Psoas muscle (tissue), 8 donors: ENCODE measurements at regions of chr6 and their contacts with region 1.

Region 1: DNA sequence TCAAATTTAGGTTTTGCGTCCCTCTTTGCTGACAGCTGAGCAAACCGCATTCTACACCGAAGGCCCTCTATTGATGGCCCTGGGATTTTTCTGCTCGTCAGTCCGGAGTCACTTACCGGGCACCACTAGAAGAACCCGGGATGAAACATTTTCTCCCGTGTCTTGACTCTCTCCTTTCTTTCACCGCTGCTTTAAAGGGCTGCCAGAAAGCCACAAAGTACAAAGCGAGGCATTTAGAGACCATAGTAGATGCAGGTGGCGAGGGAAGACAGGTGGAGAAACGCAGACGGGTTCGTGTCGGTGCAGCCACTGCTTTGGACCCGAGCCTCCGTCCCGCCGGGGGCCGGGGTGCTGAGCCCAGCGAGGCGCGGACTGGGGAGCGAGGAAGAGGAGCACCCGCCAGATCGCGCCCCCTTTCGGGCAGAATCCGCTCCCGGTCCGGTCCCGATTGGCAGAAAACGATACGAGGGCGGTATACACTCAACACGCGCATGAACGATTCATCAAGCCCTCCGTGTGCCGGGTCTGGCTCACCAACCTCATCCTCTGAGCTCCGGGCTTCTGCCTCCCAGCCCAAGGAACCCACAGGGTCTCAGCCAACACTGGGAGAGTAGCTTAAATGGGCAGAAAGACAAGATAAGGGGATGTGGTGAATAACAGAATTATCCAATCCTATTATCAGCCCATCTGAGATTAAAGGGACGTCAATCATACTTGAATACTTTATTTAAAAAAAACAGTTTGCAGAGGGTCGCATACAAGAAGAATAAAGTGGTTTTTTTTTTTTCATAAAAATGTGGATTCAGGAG is 84.9 kb downstream of the TRIM27 start:
- DNase-seq: peak; percentile 78 to 79
- ATAC-seq: peak; percentile 76 to 86 (median 79)
- H3K4me3 ChIP-seq: peak overlapping the region; percentile 86
- H3K27ac ChIP-seq: peak overlapping the region; percentile 42
- H3K4me1 ChIP-seq: peaks cover 11% of the 10 kb centered on the region
- H3K27me3 ChIP-seq: peaks cover 0 to 54% (median 3%) of the 10 kb centered on the region in 3 donors
- CTCF ChIP-seq: peak; percentile 44

Region 2: DNA sequence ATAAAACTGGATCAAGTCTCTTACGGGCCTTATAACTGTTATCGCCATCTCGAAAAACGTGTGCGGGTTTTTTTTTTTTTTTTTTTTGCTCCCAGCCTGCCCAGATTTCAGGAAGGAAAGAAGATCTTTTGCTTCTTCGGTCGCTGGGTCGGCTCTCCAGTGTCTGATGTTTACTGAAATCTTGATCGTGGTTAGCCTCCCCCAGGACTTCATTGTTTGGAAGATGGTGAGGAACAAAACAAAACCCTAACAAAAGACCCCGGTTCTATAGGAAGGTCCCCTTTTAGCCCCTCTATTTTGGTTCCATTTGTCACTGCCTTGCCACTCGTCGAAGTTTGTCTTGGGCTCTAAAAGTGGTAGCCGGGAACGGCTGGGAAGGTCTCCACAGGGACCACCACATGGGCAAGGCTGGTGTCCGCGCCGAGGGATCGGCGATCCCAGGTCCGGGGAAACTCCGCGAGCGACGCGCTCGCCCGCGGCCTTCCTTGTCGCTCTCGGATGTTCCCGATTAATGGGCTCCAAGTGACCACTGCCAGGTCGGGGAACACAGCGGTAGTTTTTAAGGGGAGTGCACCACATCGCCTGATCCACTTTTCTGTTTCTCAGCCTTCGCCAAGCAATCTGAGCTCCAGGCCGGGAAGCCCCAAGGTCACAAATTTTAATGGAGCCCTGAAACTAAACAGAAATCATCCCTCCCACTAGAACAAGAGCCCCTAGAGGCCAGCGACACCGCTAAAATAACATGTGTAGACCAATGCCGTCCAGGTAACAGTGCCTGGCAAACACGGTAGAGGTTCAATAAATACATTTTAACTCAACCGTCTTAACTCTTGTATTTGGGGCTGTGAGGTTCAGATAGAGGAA is 57.9 kb after region 1 on chr6:
- intact Hi-C with region 1: loop called in 1 of 2 experiments (anchors 2 kb)
- DNase-seq: peak; percentile 54 to 74
- ATAC-seq: peak; percentile 49 to 68 (median 58)
- H3K4me3 ChIP-seq: peak overlapping the region; percentile 73
- H3K27ac ChIP-seq: peak overlapping the region; percentile 91
- H3K4me1 ChIP-seq: peaks cover 6% of the 10 kb centered on the region
- H3K27me3 ChIP-seq: no peaks in the 10 kb centered on the region
- CTCF ChIP-seq: peak; percentile 34

Region 3: GRCh38 chr6:28940858-28941680 is 102.2 kb after region 1 on chr6:
- intact Hi-C with region 1: loop called in 1 of 2 experiments (anchors 10 kb)
- DNase-seq: peak; percentile 51 to 67
- ATAC-seq: peak; percentile 78 to 89 (median 86)
- H3K4me3 ChIP-seq: peak overlapping the region; percentile 71
- H3K27ac ChIP-seq: peak overlapping the region; percentile 48
- H3K4me1 ChIP-seq: peaks cover 16% of the 10 kb centered on the region
- H3K27me3 ChIP-seq: peaks cover 0 to 23% (median 0%) of the 10 kb centered on the region in 3 donors
- CTCF ChIP-seq: no peak

Region 4: GRCh38 chr6:28960846-28961500 is 122.1 kb after region 1 on chr6:
- intact Hi-C with region 1: no loop called
- DNase-seq: no peak
- ATAC-seq: no peak
- H3K4me3 ChIP-seq: no peak overlapping the region
- H3K27ac ChIP-seq: no peak overlapping the region
- H3K4me1 ChIP-seq: no peaks in the 10 kb centered on the region
- H3K27me3 ChIP-seq: peaks cover 0 to 19% (median 7%) of the 10 kb centered on the region in 3 donors
- CTCF ChIP-seq: no peak

Region 5: DNA sequence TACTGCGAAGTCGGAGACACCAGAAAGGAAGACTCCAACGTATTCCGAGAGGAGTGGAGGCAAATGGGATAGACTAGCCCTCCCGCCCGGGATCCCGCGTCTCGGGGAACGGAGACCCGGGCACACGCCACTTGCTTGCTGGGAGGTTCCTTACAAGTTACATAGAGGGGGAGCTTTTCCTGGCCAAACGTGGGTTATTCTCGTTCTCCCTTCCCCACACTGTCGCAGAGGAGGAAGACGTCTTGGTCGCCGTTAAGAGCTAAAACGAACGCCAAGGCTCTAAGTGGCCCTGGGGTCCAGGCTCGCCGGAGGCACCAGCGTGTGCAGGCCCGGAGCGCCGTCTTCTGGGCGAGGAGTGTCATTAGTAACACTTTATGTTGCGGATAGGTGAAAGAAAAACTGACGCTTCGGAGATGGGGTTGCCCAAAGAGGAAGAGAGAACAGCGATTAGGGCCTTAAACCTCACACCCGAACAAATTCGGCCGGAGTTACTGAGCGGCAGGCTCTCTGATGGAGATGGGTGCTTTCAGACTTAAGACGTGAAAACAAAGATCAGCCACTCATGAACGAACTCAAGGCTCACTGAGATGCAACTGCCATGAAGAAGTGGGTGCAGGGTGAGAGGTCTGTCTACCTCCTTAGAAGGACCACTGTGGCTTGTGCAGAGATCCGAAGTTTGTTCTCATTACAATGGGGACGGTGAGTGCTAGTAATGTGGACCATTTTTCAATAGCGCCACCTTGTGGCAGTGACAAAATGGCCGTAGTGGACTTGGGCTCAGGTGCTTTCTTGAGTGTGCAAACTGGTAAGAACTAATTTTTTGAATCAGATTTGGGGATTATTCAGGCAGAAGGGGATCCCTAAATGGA is 178.0 kb after region 1 on chr6:
- intact Hi-C with region 1: loop called (anchors 1 to 2 kb)
- DNase-seq: peak; percentile 71 to 80
- ATAC-seq: peak; percentile 78 to 97 (median 82)
- H3K4me3 ChIP-seq: peak overlapping the region; percentile 65
- H3K27ac ChIP-seq: no peak overlapping the region
- H3K4me1 ChIP-seq: no peaks in the 10 kb centered on the region
- H3K27me3 ChIP-seq: peaks cover 0 to 50% (median 15%) of the 10 kb centered on the region in 3 donors
- CTCF ChIP-seq: peak; percentile 80